B cell (primary cell): ENCODE measurements at regions of chr6 and their contacts with region 1.

Region 1: GRCh38 chr6:44246663-44247337 is at the start of gene HSP90AB1:
- DNase-seq: peak; percentile 99
- ATAC-seq: peak; percentile 74
- H3K4me3 ChIP-seq: peak within 1 kb of the TSS; percentile 85 to 100 (median 98)
- H3K4me3 Mint-ChIP-seq: peak within 1 kb of the TSS; percentile 96
- H3K27ac ChIP-seq: peak within 1 kb of the TSS; percentile 93 to 99
- H3K27ac Mint-ChIP-seq: peak within 1 kb of the TSS; percentile 95
- H3K4me1 ChIP-seq: peaks cover 12 to 30% of the 10 kb centered on the region in 2 donors
- H3K4me1 Mint-ChIP-seq: peaks cover 43% of the 10 kb centered on the region
- H3K27me3 ChIP-seq: no peaks in the 10 kb centered on the region
- H3K27me3 Mint-ChIP-seq: no peaks in the 10 kb centered on the region
- CTCF ChIP-seq: no peak
- total RNA-seq, gene HSP90AB1: 384 and 395 TPM in 2 replicates

Region 2: DNA sequence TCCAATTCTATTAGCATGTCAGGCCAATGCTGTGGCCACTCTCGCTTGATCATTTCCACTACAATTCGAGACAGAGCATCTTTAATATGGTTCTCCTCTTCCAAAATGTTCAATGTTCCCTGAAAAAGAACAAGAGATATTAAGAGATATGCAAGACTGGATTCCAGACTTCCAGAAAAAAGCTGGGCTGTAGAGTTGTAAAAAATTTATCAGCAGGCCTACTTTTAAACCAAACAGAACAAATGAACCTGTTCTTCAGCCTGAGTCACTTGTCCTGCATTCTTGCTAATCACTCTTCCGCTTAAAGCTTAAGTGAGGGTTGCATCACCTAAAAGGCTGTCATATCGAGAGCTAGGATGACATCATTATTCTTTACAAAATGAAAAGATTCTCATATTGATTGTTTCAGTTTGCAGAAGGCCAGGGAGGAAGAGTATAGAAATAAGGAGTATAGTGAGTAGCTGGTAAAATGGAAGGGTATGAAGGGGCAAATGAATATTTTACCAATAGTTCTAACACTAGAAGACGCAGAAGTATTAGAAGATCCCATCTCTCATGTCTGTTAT is 675.8 kb before region 1 on chr6:
- CTCF ChIA-PET with region 1: no interaction called
- POLR2A ChIA-PET with region 1: no interaction called
- intact Hi-C with region 1: no loop called
- DNase-seq: no peak
- ATAC-seq: no peak
- H3K4me3 ChIP-seq: no peak overlapping the region
- H3K4me3 Mint-ChIP-seq: no peak overlapping the region
- H3K27ac ChIP-seq: no peak overlapping the region
- H3K27ac Mint-ChIP-seq: no peak overlapping the region
- H3K4me1 ChIP-seq: peaks cover 5 to 10% of the 10 kb centered on the region in 2 donors
- H3K4me1 Mint-ChIP-seq: peaks cover 9% of the 10 kb centered on the region
- H3K27me3 ChIP-seq: no peaks in the 10 kb centered on the region
- H3K27me3 Mint-ChIP-seq: no peaks in the 10 kb centered on the region
- CTCF ChIP-seq: no peak

Region 3: GRCh38 chr6:44127186-44128019 is 119.4 kb before region 1 on chr6 and contains the starts of genes MRPL14 and TMEM63B:
- CTCF ChIA-PET with region 1: no interaction called
- POLR2A ChIA-PET with region 1: interaction called, 3 read pairs
- intact Hi-C with region 1: loop called (anchors 5 kb)
- DNase-seq: peak; percentile 94
- ATAC-seq: peak; percentile 91
- H3K4me3 ChIP-seq: peak within 1 kb of the TSS; percentile 62 to 98 (median 91)
- H3K4me3 Mint-ChIP-seq: peak within 1 kb of the TSS; percentile 95
- H3K27ac ChIP-seq: peak within 1 kb of the TSS; percentile 83 to 94
- H3K27ac Mint-ChIP-seq: peak within 1 kb of the TSS; percentile 93
- H3K4me1 ChIP-seq: peaks cover 35 to 47% of the 10 kb centered on the region in 2 donors
- H3K4me1 Mint-ChIP-seq: peaks cover 50% of the 10 kb centered on the region
- H3K27me3 ChIP-seq: no peaks in the 10 kb centered on the region
- H3K27me3 Mint-ChIP-seq: no peaks in the 10 kb centered on the region
- CTCF ChIP-seq: no peak
- total RNA-seq, gene MRPL14: 16.7 and 16.8 TPM in 2 replicates
- total RNA-seq, gene TMEM63B: 18.3 and 19.1 TPM in 2 replicates

Region 4: DNA sequence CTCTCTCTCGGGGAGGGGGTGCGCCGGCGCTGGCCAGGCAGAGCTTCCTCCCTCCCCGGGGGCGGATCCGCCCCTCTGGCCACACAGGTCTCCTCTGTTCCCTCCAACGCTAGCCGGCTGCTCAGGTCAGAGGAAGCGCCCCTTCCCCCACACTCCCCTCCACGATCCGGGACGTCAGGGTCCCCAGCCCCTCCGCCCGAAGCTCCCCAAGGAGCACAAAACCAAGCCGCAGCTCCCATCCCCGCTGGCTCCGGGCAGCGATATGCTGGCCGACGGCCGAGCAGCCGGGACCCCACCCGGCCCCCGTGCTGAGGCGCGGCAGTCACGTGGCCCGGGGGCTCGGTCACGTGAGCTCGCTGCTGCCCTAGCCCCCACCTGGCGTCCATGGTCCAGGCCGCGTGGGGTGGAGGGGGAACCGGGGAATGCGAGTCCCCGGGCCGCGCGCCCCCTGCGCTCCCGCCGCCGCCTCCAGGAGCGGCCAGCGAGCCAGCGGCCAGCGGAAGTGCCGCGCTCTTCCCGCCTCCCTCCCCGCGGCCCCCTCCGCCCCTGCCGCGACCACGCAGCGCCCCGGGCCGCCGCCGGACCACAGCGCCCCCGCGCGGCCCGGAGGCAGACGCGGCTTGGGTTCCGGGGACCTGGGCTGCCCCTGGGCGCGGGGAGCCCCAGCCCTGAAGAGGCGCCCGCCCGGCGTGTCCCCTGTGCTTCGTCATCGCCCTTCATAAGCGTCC is 10.4 kb after region 1 on chr6 and contains the start of gene SLC35B2:
- CTCF ChIA-PET with region 1: interaction called, 68 read pairs
- POLR2A ChIA-PET with region 1: interaction called, 105 read pairs
- intact Hi-C with region 1: loop called (anchors 1 kb)
- DNase-seq: peak; percentile 87
- ATAC-seq: peak; percentile 64
- H3K4me3 ChIP-seq: peak within 1 kb of the TSS; percentile 35 to 93 (median 90)
- H3K4me3 Mint-ChIP-seq: peak within 1 kb of the TSS; percentile 88
- H3K27ac ChIP-seq: peak within 1 kb of the TSS; percentile 83 to 98
- H3K27ac Mint-ChIP-seq: peak within 1 kb of the TSS; percentile 100
- H3K4me1 ChIP-seq: peaks cover 57 to 81% of the 10 kb centered on the region in 2 donors
- H3K4me1 Mint-ChIP-seq: peaks cover 89% of the 10 kb centered on the region
- H3K27me3 ChIP-seq: no peaks in the 10 kb centered on the region
- H3K27me3 Mint-ChIP-seq: no peaks in the 10 kb centered on the region
- CTCF ChIP-seq: peak; percentile 75
- total RNA-seq, gene SLC35B2: 29.2 and 30.0 TPM in 2 replicates

Region 5: DNA sequence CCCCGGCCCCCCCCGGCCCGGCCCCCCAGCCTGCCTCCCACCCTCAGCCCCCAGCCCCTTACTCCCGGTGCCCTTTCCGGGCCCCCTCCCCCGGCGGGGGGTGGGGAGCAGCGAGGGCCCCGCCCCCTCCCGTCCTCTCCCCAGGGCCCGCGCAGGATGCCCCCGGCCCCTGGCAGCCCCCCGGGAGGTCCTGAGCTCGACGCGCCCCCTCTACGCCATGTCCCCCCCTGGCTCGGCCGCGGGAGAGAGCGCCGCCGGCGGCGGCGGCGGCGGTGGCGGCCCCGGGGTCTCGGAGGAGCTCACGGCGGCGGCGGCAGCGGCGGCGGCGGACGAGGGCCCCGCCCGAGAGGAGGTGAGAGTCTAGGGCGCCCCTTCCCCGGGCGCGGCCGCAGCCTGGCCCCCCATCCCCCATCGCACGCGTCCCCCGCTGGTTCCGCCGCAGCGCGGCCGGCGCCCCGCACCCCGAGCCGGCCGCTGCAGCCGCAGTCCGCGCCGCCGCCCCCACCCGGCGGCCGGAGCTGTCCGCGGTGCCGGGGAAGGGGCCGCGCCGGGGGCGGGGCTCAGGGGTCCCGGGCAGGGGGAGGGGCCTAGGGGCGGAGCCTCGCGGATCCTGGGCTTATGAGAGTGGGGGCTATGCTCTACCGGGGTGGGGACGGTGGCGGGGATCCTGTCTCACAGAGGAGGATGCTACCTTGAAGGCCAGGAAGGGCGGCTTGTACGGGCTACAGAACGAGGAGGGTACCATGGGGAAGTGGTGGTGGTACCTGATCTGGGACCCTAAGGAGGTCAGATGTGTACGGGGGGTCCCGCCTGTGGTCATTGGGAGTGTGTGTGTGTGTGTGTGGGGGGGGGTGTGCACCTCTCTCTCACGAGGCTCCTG is 24.0 kb after region 1 on chr6:
- CTCF ChIA-PET with region 1: interaction called, 11 read pairs
- POLR2A ChIA-PET with region 1: interaction called, 105 read pairs
- intact Hi-C with region 1: no loop called
- DNase-seq: peak; percentile 45
- ATAC-seq: peak; percentile 10
- H3K4me3 ChIP-seq: peak overlapping the region in 3 of 5 experiments; percentile 34 to 52 (median 37)
- H3K4me3 Mint-ChIP-seq: peak overlapping the region; percentile 81
- H3K27ac ChIP-seq: no peak overlapping the region
- H3K27ac Mint-ChIP-seq: no peak overlapping the region
- H3K4me1 ChIP-seq: peaks cover 26 to 28% of the 10 kb centered on the region in 2 donors
- H3K4me1 Mint-ChIP-seq: peaks cover 35% of the 10 kb centered on the region
- H3K27me3 ChIP-seq: peaks cover 0 to 57% (median 32%) of the 10 kb centered on the region in 4 experiments
- H3K27me3 Mint-ChIP-seq: peaks cover 40% of the 10 kb centered on the region
- CTCF ChIP-seq: no peak

Region 6: GRCh38 chr6:44304282-44305199 is 57.7 kb after region 1 on chr6:
- CTCF ChIA-PET with region 1: interaction called, 10 read pairs
- POLR2A ChIA-PET with region 1: interaction called, 3 read pairs
- intact Hi-C with region 1: no loop called
- DNase-seq: peak; percentile 70
- ATAC-seq: peak; percentile 89
- H3K4me3 ChIP-seq: no peak overlapping the region
- H3K4me3 Mint-ChIP-seq: no peak overlapping the region
- H3K27ac ChIP-seq: no peak overlapping the region
- H3K27ac Mint-ChIP-seq: no peak overlapping the region
- H3K4me1 ChIP-seq: no peaks in the 10 kb centered on the region
- H3K4me1 Mint-ChIP-seq: no peaks in the 10 kb centered on the region
- H3K27me3 ChIP-seq: no peaks in the 10 kb centered on the region
- H3K27me3 Mint-ChIP-seq: no peaks in the 10 kb centered on the region
- CTCF ChIP-seq: peak; percentile 84

Region 7: DNA sequence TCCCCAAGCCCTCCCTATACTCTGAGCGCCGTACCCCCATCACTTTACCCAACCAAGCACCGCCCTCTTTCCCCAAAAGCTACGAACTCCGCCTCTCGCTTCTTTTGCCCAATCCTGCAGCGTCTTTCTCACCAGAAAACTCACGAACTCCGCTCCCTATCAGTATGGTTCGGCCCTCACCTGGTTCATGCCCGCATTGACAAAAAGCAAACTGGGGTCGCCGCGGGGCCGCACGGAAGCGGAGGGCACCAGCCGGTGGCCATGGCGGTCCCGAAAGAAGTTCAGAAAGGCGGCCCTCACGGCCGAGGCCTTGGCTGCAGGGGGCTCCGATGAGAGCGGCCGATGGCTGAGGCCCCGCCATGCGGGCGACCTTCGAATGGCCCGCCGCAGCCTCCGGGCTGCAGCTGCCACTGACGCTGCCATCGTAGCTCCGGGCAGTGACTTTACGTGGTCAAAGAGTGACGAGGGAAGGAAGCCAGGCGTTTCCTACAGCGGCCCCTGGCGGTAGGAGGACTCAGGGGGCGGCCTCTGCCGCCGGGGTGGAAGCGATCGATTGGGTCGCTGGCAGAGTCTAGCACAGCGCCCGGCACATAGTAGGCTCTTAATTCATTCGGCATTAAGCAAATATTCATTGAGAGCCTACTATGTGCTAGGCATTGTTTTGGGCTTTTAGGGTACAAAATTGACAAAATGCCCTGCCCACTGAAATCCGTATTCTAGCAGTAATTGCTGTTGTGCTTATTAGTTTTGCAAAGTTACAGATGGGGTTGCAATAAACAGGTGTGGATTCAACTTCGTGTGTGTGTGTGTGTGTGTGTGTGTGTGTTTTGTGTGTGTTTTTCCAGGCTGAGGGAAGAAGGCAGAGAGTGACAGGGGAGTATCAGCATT is 66.3 kb after region 1 on chr6 and contains the start of gene AARS2:
- CTCF ChIA-PET with region 1: interaction called, 3 read pairs
- POLR2A ChIA-PET with region 1: interaction called, 4 read pairs
- intact Hi-C with region 1: loop called (anchors 2 kb)
- DNase-seq: peak; percentile 93
- ATAC-seq: peak; percentile 97
- H3K4me3 ChIP-seq: peak within 1 kb of the TSS; percentile 76 to 94 (median 88)
- H3K4me3 Mint-ChIP-seq: peak within 1 kb of the TSS; percentile 94
- H3K27ac ChIP-seq: peak within 1 kb of the TSS; percentile 72 to 86
- H3K27ac Mint-ChIP-seq: peak within 1 kb of the TSS; percentile 92
- H3K4me1 ChIP-seq: peaks cover 7 to 9% of the 10 kb centered on the region in 2 donors
- H3K4me1 Mint-ChIP-seq: peaks cover 17% of the 10 kb centered on the region
- H3K27me3 ChIP-seq: peaks cover 0 to 4% (median under 1%) of the 10 kb centered on the region in 4 experiments
- H3K27me3 Mint-ChIP-seq: peaks cover 2% of the 10 kb centered on the region
- CTCF ChIP-seq: peak; percentile 97
- total RNA-seq, gene AARS2: 21.3 and 22.6 TPM in 2 replicates